ENCODE measurements at regions of chr7 and their contacts with region 1.

Region 1: GRCh38 chr7:121366852-121367431 is 29.2 kb downstream of the FAM3C start:
- DNase-seq: no peak
- H3K4me3 ChIP-seq: no peak overlapping the region
- H3K27ac ChIP-seq: no peak overlapping the region
- H3K4me1 ChIP-seq: peaks cover 0 to 2% (median 0%) of the 10 kb centered on the region in 4 experiments; a peak in 3 of 7 replicates
- H3K27me3 ChIP-seq: no peaks in the 10 kb centered on the region
- CTCF ChIP-seq: peak in 2 of 3 experiments; percentile 40 to 56; a peak in 2 of 4 replicates
- EP300 ChIP-seq: no peak
- POLR2A ChIP-seq: no peak
- RAD21 ChIP-seq: peak in 1 of 2 experiments; percentile 72

Region 2: GRCh38 chr7:121054925-121055324 is 312.0 kb before region 1 on chr7:
- CTCF ChIA-PET with region 1: no interaction called
- POLR2A ChIA-PET with region 1: no interaction called
- DNase-seq: no peak
- H3K4me3 ChIP-seq: no peak overlapping the region
- H3K27ac ChIP-seq: no peak overlapping the region
- H3K4me1 ChIP-seq: peaks cover 0 to under 1% (median 0%) of the 10 kb centered on the region in 4 experiments; a peak in 2 of 7 replicates
- H3K27me3 ChIP-seq: no peaks in the 10 kb centered on the region
- CTCF ChIP-seq: no peak
- EP300 ChIP-seq: no peak
- POLR2A ChIP-seq: no peak
- RAD21 ChIP-seq: no peak

Region 3: GRCh38 chr7:121351679-121352078 is 15.3 kb before region 1 on chr7:
- CTCF ChIA-PET with region 1: interaction called, 28 read pairs
- POLR2A ChIA-PET with region 1: interaction called, 4 read pairs
- DNase-seq: no peak
- H3K4me3 ChIP-seq: no peak overlapping the region
- H3K27ac ChIP-seq: no peak overlapping the region
- H3K4me1 ChIP-seq: no peaks in the 10 kb centered on the region
- H3K27me3 ChIP-seq: no peaks in the 10 kb centered on the region
- CTCF ChIP-seq: no peak
- EP300 ChIP-seq: no peak
- POLR2A ChIP-seq: no peak
- RAD21 ChIP-seq: no peak

Region 4: DNA sequence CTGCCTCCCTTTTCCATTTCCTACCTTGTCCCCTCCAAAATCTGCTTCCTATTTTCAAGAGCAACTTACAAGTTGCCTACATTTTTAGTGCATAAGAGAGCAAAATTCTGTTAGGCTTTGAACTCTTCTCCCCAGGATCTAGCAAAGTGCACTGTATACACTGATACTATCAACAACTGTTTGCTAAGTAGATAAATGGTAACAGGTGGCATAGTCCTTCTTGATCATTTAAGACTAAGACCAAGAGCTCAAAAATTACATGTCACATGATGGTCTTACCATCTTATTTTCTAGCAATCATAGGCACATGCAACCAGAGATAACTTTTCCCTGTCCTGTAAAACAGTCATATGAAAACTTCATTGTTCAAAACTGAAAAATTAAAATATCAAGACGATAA is 13.0 kb after region 1 on chr7:
- CTCF ChIA-PET with region 1: interaction called, 12 read pairs
- POLR2A ChIA-PET with region 1: interaction called, 3 read pairs
- DNase-seq: no peak
- H3K4me3 ChIP-seq: no peak overlapping the region
- H3K27ac ChIP-seq: no peak overlapping the region
- H3K4me1 ChIP-seq: no peaks in the 10 kb centered on the region
- H3K27me3 ChIP-seq: peaks cover 0 to 1% (median 0%) of the 10 kb centered on the region in 4 experiments; a peak in 1 of 7 replicates
- CTCF ChIP-seq: no peak
- EP300 ChIP-seq: no peak
- POLR2A ChIP-seq: no peak
- RAD21 ChIP-seq: no peak

Region 5: DNA sequence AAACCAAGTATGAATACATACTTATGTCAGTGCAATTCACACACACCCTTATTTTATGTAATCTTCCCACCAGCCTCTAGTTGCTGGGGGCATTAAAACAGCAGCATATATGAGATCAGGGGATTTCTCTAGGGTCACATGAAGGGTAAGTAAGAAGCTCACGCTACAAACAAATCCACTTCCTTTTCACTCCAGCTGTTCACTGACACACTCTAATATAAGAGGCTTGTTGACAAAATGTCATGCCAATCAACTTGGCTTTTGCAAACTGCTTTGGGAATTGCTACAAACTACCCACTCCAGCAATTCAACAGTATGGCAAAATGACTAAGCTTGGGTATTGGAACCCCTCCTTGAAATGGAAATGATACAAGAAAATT is 18.8 kb after region 1 on chr7:
- CTCF ChIA-PET with region 1: interaction called, 16 read pairs
- POLR2A ChIA-PET with region 1: interaction called, 3 read pairs
- DNase-seq: no peak
- H3K4me3 ChIP-seq: no peak overlapping the region
- H3K27ac ChIP-seq: no peak overlapping the region
- H3K4me1 ChIP-seq: no peaks in the 10 kb centered on the region; a peak in 1 of 7 replicates
- H3K27me3 ChIP-seq: no peaks in the 10 kb centered on the region
- CTCF ChIP-seq: no peak
- EP300 ChIP-seq: no peak
- POLR2A ChIP-seq: no peak
- RAD21 ChIP-seq: no peak

Region 6: DNA sequence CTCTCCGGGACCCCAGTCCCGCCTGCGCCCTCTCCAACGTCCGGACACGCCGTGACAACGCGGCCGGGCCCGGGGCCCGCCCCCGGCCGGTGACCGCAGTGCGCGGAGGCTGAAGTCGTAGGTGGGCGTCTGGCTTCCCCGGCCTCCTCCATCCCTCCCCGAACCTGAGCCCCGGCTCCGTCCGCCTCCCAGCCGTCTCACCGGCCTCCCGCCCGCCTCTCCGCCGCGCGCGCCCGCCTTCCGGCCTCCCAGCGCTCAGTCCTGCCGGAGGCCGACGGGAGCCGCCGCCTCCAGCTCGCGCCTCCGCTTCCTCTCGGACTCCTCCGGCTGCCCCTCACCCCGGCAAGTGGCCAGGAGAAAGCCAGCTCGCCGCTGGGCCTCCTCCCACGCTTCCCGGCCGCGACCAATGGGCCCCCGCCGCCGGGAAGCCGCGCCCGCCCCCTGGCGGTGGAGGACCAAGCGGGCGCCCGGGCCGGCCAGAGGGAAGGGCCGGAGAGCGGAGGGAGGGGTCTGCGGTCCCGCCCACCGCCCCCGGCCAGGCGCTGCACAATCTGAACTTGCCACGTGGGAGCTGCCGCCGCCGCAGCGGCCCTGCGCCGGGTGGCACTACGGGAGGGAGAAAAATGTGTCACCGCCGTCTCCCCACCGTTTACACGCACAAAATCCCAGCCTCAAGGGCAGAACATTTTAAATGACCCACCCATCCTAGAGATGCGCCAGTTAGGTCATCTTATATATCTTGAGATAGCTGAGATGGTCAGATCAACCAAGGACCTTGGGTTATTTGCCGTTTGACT is 29.2 kb after region 1 on chr7 and contains the start of gene FAM3C:
- CTCF ChIA-PET with region 1: interaction called, 23 read pairs
- POLR2A ChIA-PET with region 1: interaction called, 3 read pairs
- DNase-seq: peak; percentile 53 to 92
- H3K4me3 ChIP-seq: peak within 1 kb of the TSS; percentile 53 to 81 (median 76)
- H3K27ac ChIP-seq: peak within 1 kb of the TSS; percentile 84
- H3K4me1 ChIP-seq: no peaks in the 10 kb centered on the region
- H3K27me3 ChIP-seq: no peaks in the 10 kb centered on the region
- CTCF ChIP-seq: peak; percentile 77 to 78 (median 77)
- EP300 ChIP-seq: 0 out of 3 replicates have a peak, but pooled peaks of 1 of the 2 experiments have one; percentile 38
- POLR2A ChIP-seq: peak; percentile 75 to 88
- RAD21 ChIP-seq: peak; percentile 35 to 55
- total RNA-seq, gene FAM3C: 71.5 and 77.7 TPM in 2 replicates

Region 7: GRCh38 chr7:121440857-121441503 is 74.0 kb after region 1 on chr7:
- CTCF ChIA-PET with region 1: no interaction called
- POLR2A ChIA-PET with region 1: no interaction called
- DNase-seq: no peak
- H3K4me3 ChIP-seq: no peak overlapping the region
- H3K27ac ChIP-seq: no peak overlapping the region
- H3K4me1 ChIP-seq: peaks cover 0 to 4% (median 2%) of the 10 kb centered on the region in 4 experiments; a peak in 4 of 7 replicates
- H3K27me3 ChIP-seq: no peaks in the 10 kb centered on the region
- CTCF ChIP-seq: no peak
- EP300 ChIP-seq: no peak
- POLR2A ChIP-seq: no peak
- RAD21 ChIP-seq: no peak

Region 8: GRCh38 chr7:121547544-121548092 is 180.7 kb after region 1 on chr7:
- CTCF ChIA-PET with region 1: interaction called, 40 read pairs
- POLR2A ChIA-PET with region 1: interaction called, 5 read pairs
- DNase-seq: no peak
- H3K4me3 ChIP-seq: no peak overlapping the region
- H3K27ac ChIP-seq: no peak overlapping the region
- H3K4me1 ChIP-seq: no peaks in the 10 kb centered on the region
- H3K27me3 ChIP-seq: no peaks in the 10 kb centered on the region
- CTCF ChIP-seq: peak in 2 of 3 experiments; percentile 57 to 71; a peak in 3 of 4 replicates
- EP300 ChIP-seq: no peak
- POLR2A ChIP-seq: no peak
- RAD21 ChIP-seq: peak; percentile 88 to 92

Measured in H1 (cell line).